Esophagus muscularis mucosa (tissue), 4 donors: ENCODE measurements at regions of chr12 and their contacts with region 1.

Region 1: DNA sequence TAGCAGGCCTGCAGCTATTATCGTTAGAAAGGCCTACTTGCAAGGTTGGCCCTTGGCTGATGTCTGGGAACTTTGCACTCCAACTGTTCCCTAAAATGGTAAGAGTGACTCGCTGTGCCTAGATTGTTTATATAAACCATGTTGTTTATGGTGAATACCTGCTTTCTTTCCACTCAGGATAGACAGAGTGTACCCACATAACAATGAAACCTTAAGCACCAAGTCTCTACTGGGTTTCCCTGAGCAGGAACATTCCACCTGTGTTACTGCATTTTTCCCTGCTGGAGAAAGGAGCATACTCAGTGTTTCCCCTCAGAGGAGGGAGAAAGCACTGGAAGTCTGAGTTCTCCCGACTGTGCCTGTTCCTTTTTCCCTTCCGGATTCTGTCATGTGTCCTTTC is 32.8 kb downstream of the ERP29 start:
- DNase-seq: no peak
- H3K4me3 ChIP-seq: no peak overlapping the region
- H3K27ac ChIP-seq: peak overlapping the region; percentile 73 to 83 (median 76)
- H3K4me1 ChIP-seq: peaks cover 0 to 50% (median 39%) of the 10 kb centered on the region in 4 donors
- H3K27me3 ChIP-seq: no peaks in the 10 kb centered on the region
- CTCF ChIP-seq: peak in 1 of 3 experiments; percentile 8
- EP300 ChIP-seq: no peak
- POLR2A ChIP-seq: no peak

Region 2: GRCh38 chr12:111993292-111994150 is 52.5 kb before region 1 on chr12:
- intact Hi-C with region 1: no loop called
- DNase-seq: no peak
- H3K4me3 ChIP-seq: no peak overlapping the region
- H3K27ac ChIP-seq: no peak overlapping the region
- H3K4me1 ChIP-seq: peaks cover 0 to 10% (median 0%) of the 10 kb centered on the region in 4 donors
- H3K27me3 ChIP-seq: no peaks in the 10 kb centered on the region
- CTCF ChIP-seq: no peak
- EP300 ChIP-seq: no peak
- POLR2A ChIP-seq: no peak

Region 3: GRCh38 chr12:112148031-112148513 is 102.1 kb after region 1 on chr12:
- intact Hi-C with region 1: loop called (anchors 10 kb)
- DNase-seq: peak; percentile 21
- H3K4me3 ChIP-seq: no peak overlapping the region
- H3K27ac ChIP-seq: no peak overlapping the region
- H3K4me1 ChIP-seq: peaks cover 0 to 6% (median 0%) of the 10 kb centered on the region in 4 donors
- H3K27me3 ChIP-seq: no peaks in the 10 kb centered on the region
- CTCF ChIP-seq: no peak
- EP300 ChIP-seq: no peak
- POLR2A ChIP-seq: no peak